Activated naive CD4-positive, alpha-beta T cell treated with anti-CD3 and anti-CD28 coated beads for 36 hours (primary cell): ENCODE measurements at regions of chr7 and their contacts with region 1.

Region 1: DNA sequence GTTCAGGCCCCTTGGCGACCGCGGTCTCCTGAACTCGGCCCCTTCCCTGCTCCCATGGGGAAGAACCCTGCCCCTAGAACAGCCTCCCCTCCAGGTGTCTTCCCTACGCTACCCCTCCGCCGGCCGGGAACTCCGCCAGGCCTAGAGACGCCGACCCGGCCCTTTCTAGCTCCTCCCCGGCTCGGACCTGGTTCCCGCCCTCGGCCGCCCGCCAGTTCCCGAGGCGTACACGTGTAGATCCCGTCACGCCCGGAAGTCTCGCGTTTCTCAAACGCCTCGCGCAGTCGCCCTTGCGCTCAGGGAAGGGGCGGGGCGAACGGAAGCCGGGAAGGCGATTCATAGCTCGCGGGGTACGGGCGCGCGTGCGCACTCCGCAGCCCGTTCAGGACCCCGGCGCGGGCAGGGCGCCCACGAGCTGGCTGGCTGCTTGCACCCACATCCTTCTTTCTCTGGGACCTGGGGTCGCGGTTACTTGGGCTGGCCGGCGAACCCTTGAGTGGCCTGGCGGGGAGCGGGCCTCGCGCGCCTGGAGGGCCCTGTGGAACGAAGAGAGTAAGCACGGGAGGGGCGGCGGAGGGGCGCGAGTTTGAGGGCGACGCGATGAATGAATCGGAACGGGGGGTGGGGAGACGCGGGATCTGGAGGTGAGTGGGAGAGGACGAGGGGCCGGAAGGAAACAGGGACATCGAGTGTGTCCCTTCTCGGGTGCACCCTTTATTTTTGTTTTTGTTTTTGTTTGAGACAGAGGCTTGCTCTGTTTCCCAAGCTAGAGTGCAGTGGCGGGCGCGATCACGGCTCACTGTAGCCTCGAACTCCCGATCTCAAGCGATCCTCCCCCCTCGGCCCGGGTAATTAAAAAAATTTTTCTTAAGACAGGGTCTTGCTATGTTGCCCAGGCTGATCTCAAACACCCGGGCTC is at the start of gene POP7:
- DNase-seq: peak; percentile 99
- H3K4me3 Mint-ChIP-seq: peak within 1 kb of the TSS; percentile 96
- H3K27ac Mint-ChIP-seq: peak within 1 kb of the TSS; percentile 89
- H3K4me1 Mint-ChIP-seq: peaks cover 15% of the 10 kb centered on the region
- H3K27me3 Mint-ChIP-seq: peaks cover 4% of the 10 kb centered on the region
- total RNA-seq, gene POP7: 23.2 to 29.6 TPM

Region 2: GRCh38 chr7:100119062-100119700 is 586.8 kb before region 1 on chr7 and contains the starts of genes CNPY4 and TAF6:
- CTCF ChIA-PET with region 1: no interaction called
- intact Hi-C with region 1: no loop called
- DNase-seq: peak; percentile 96
- H3K4me3 Mint-ChIP-seq: peak within 1 kb of the TSS; percentile 93
- H3K27ac Mint-ChIP-seq: peak within 1 kb of the TSS; percentile 95
- H3K4me1 Mint-ChIP-seq: peaks cover 17% of the 10 kb centered on the region
- H3K27me3 Mint-ChIP-seq: no peaks in the 10 kb centered on the region
- total RNA-seq, gene CNPY4: 7.2 to 8.7 TPM
- total RNA-seq, gene TAF6: 48.9 to 53.5 TPM

Region 3: DNA sequence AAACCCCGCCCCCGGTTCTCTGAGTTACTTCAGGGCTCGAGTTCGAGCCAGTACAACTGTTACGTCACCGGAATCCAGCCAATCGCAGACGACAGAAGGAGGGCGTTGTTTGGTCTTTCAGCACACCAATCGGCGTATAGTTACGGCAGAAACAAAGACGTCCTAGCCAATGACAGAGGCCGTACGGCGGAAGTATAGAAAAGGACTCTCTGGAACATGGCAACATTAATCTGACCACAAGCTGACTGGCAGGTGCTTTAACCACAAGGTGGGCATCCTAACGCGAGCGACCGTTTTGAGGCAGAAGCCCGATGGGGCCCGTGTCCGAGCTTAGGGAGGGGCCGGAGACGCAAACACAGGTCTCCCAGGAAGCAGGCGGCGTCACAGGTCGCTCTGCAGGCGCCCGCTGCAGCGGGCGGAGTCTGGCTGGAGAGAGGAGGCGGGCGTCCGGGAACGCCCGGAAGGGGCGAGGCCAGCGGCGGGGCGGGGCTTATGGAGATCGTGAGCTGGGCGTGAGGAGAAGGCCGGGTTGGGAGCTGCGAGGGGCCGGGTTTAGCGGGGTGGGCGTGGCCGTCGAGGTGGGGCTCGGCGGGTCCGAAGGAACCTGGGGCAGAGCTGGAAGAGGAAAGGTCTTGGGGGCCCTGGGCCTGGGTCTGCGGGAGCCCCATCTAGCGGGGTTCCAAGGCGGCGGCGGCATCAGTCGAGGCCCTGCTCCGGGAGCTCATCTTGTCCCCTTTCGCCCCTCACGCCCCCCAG is 93.9 kb before region 1 on chr7 and contains the start of gene MOSPD3:
- CTCF ChIA-PET with region 1: interaction called, 8 read pairs
- intact Hi-C with region 1: loop called (anchors 1 kb)
- DNase-seq: peak; percentile 99
- H3K4me3 Mint-ChIP-seq: peak within 1 kb of the TSS; percentile 98
- H3K27ac Mint-ChIP-seq: peak within 1 kb of the TSS; percentile 99
- H3K4me1 Mint-ChIP-seq: peaks cover 13% of the 10 kb centered on the region
- H3K27me3 Mint-ChIP-seq: no peaks in the 10 kb centered on the region
- total RNA-seq, gene MOSPD3: 12.3 to 13.0 TPM

Region 4: GRCh38 chr7:100673300-100673941 is 32.6 kb before region 1 on chr7 and contains the start of gene GNB2:
- CTCF ChIA-PET with region 1: interaction called, 6 read pairs
- intact Hi-C with region 1: loop called (anchors 1 kb)
- DNase-seq: peak; percentile 100
- H3K4me3 Mint-ChIP-seq: peak within 1 kb of the TSS; percentile 97
- H3K27ac Mint-ChIP-seq: peak within 1 kb of the TSS; percentile 95
- H3K4me1 Mint-ChIP-seq: peaks cover 17% of the 10 kb centered on the region
- H3K27me3 Mint-ChIP-seq: no peaks in the 10 kb centered on the region
- total RNA-seq, gene GNB2: 221 TPM

Region 5: GRCh38 chr7:100720645-100721504 is 14.9 kb after region 1 on chr7:
- CTCF ChIA-PET with region 1: interaction called, 52 read pairs
- intact Hi-C with region 1: loop called (anchors 1 kb)
- DNase-seq: no peak
- H3K4me3 Mint-ChIP-seq: no peak overlapping the region
- H3K27ac Mint-ChIP-seq: no peak overlapping the region
- H3K4me1 Mint-ChIP-seq: peaks cover 3% of the 10 kb centered on the region
- H3K27me3 Mint-ChIP-seq: peaks cover 39% of the 10 kb centered on the region

Region 6: GRCh38 chr7:100852048-100852872 is 146.2 kb after region 1 on chr7 and contains the start of gene SLC12A9:
- CTCF ChIA-PET with region 1: interaction called, 30 read pairs
- intact Hi-C with region 1: loop called (anchors 1 kb)
- DNase-seq: peak; percentile 89
- H3K4me3 Mint-ChIP-seq: peak within 1 kb of the TSS; percentile 89
- H3K27ac Mint-ChIP-seq: peak within 1 kb of the TSS; percentile 50
- H3K4me1 Mint-ChIP-seq: peaks cover 18% of the 10 kb centered on the region
- H3K27me3 Mint-ChIP-seq: no peaks in the 10 kb centered on the region
- total RNA-seq, gene SLC12A9: 10.1 to 10.5 TPM